ENCODE measurements at regions of chr5 and their contacts with region 1.

Region 1: GRCh38 chr5:150544611-150545219 is 36.8 kb downstream of the NDST1 start:
- DNase-seq: peak in 9 of 10 donors; percentile 50 to 95 (median 69)

Region 2: DNA sequence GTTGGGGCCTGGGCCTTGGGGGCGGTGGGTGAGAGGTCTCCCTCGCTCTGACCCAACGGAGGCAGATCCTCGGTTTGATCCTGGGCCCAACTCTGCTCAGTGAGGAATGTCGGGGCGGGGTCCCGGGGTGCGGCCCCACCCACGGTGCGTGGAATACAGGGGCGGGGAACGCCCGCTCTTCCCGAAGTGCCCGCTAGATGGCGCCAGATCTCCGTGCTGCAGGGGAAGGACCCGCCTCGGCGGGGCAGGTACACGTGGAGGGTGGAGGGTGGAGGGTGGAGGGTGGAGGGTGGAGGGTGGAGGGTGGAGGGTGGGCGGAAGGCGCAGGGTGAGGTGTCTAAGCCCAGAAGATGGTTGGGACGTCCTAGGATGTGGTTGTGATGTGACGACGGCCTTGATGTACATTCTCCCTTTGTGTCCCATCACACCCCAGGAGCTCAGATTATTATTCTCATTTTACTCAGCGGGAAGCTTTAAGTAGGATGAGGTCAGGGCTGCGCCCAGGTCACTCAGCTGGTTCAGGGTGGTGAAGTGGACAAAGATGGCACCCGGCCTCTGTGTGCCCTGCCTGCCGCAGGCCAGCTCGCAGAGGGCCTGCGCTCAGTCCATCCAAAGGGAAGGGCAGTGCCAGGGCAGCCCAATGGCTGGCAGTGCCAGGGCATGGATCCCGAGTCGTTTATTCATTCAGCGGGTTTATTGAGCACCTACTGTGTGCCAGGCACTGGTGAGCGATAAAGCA is 85.7 kb before region 1 on chr5:
- intact Hi-C with region 1: loop called (anchors 1 kb)
- DNase-seq: peak; percentile 58 to 97 (median 82)

Region 3: DNA sequence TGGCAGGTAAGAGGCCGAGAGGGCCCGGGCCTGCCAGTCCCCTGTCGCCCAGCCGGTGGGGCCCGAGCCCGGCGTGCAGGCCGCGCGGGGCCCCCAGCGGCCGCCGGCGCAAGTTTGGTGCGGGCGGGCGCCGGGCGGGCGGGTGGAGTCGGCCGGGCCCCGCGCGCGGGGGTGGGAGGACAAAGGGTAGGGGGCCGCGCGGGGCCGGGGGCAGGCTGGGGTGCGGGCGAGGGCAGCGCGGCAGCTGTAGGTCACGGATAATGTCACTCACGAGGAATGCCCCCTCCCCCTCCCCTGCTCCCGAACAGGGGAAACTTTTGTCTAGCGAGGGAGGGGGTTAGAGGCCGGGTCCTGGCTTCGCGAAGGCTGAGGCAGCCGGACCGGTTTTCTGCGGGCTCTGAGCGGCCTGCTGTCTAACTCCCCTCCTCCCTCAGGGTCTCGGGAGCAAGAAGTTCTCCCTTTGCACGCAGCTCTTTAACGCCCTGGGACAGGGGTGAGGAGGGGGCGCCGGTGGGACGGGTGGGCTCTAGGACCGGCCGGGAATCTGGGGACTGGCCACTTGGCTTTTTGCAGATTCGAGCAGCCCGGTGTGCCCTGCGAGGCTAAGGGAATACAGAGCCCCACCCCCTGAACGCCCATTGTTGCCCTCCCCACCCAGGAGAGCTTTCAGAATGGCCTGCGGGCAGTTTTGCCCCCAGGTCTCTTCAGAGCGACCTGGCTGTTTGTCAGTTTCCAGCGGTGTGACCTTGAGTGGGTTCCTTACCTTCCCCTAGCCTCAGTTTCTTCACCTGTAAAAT is 58.1 kb before region 1 on chr5:
- intact Hi-C with region 1: loop called (anchors 5 kb)
- DNase-seq: peak in 4 of 10 donors; percentile 31 to 91 (median 51)